G401 (cell line): ENCODE measurements at regions of chr14 and their contacts with region 1.

Region 1: GRCh38 chr14:103594265-103594664 is 31.5 kb downstream of the COA8 start:
- DNase-seq: peak; percentile 21

Region 2: GRCh38 chr14:103267226-103267910 is 326.9 kb before region 1 on chr14:
- in situ Hi-C with region 1: no loop called
- DNase-seq: no peak

Region 3: DNA sequence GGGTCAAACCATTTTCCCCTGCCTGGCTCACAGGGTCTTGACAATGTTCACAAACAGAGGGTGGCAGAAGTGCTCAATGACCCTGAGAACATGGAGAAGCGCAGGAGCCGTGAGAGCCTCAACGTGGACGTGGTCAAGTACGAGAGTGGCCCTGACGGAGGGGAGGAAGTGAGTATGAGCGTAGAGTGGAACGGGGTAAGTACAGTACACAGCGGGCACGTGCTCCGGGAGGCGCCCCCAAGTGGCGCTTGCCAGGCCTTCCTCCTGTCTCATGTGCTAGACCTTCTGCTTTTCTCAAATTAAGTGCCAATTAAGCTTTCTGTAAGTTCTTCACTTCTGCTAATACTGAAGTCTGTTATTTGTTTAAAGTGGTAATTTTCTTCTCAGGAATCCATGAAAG is 85.1 kb after region 1 on chr14:
- in situ Hi-C with region 1: loop called (anchors 5 kb)
- DNase-seq: no peak